Activated CD4-positive, alpha-beta T cell treated with anti-CD3 and anti-CD28 coated beads for 36 hours (primary cell): ENCODE measurements at regions of chr3 and their contacts with region 1.

Region 1: GRCh38 chr3:71226565-71227269 is 356.8 kb downstream of the FOXP1 start:
- DNase-seq: peak; percentile 95
- ATAC-seq: peak; percentile 89
- H3K4me3 Mint-ChIP-seq: peak overlapping the region; percentile 78
- H3K27ac Mint-ChIP-seq: peak overlapping the region; percentile 97
- H3K4me1 Mint-ChIP-seq: peaks cover 88% of the 10 kb centered on the region
- H3K27me3 Mint-ChIP-seq: no peaks in the 10 kb centered on the region

Region 2: DNA sequence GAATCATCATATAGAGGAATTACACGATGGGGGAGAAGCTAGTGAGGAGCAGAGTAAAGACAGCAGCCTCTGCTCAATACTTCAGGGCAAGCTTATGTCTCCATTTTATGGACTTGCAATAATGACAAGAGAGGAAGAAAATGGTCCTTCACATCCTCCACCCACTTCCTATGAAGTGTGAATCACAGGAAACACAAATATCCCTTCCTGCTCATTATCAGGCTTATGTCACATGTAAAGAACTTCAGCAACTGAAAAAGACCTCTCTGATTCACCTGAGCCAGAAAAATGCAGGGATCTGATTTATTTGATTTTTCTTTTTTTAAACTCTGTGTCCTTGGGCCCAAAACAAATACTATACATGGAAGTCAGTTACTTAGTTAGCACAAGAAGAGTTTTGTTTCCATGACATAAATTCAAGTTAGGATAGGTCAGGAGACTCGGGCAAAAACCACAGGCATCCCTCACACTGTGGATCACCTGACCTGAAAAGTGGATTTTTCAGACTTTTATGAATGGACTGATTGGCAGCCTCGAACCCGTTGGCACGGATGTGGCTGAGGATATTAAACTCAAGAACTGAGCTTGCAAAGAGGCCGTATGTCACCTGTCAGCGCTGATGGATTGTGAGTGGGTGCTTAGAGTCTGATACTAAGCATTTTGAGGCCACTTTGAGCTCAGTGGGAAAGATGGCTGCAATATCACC is 293.5 kb before region 1 on chr3:
- CTCF ChIA-PET with region 1: no interaction called
- POLR2A ChIA-PET with region 1: no interaction called
- intact Hi-C with region 1: no loop called
- DNase-seq: no peak
- ATAC-seq: no peak
- H3K4me3 Mint-ChIP-seq: no peak overlapping the region
- H3K27ac Mint-ChIP-seq: no peak overlapping the region
- H3K4me1 Mint-ChIP-seq: peaks cover 6% of the 10 kb centered on the region
- H3K27me3 Mint-ChIP-seq: no peaks in the 10 kb centered on the region

Region 3: GRCh38 chr3:71057526-71057894 is 169.2 kb before region 1 on chr3:
- CTCF ChIA-PET with region 1: no interaction called
- POLR2A ChIA-PET with region 1: no interaction called
- intact Hi-C with region 1: loop called in 1 of 2 experiments (anchors 2 kb)
- DNase-seq: peak; percentile 42
- ATAC-seq: peak; percentile 80
- H3K4me3 Mint-ChIP-seq: peak overlapping the region; percentile 66
- H3K27ac Mint-ChIP-seq: peak overlapping the region; percentile 97
- H3K4me1 Mint-ChIP-seq: peaks cover 97% of the 10 kb centered on the region
- H3K27me3 Mint-ChIP-seq: no peaks in the 10 kb centered on the region

Region 4: GRCh38 chr3:71130471-71131374 is 96.0 kb before region 1 on chr3:
- CTCF ChIA-PET with region 1: interaction called, 4 read pairs
- POLR2A ChIA-PET with region 1: no interaction called
- intact Hi-C with region 1: loop called (anchors 1 kb)
- DNase-seq: peak; percentile 82
- ATAC-seq: peak; percentile 61
- H3K4me3 Mint-ChIP-seq: peak overlapping the region; percentile 90
- H3K27ac Mint-ChIP-seq: peak overlapping the region; percentile 99
- H3K4me1 Mint-ChIP-seq: peaks cover 71% of the 10 kb centered on the region
- H3K27me3 Mint-ChIP-seq: no peaks in the 10 kb centered on the region

Region 5: DNA sequence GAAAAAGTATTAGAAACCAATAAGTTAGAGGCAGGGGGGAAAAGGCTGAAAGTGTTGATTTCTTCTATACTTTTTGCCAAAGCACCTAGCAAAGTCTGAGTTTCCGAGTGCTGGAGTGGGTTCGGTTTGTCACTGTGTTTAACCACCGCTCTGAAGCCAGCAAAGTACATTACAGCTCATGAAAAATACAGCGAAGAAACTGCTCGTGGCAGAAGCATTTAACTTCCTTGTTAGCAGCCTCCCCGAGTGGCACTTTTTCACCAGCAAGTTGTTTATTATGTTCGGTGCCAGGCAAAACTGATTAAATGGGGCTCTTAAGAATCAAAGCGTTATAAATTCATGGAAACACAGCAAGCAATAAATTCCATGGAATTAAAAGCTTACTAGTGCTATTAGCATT is 43.2 kb after region 1 on chr3:
- CTCF ChIA-PET with region 1: interaction called, 3 read pairs
- POLR2A ChIA-PET with region 1: no interaction called
- intact Hi-C with region 1: loop called in 1 of 2 experiments (anchors 5 kb)
- DNase-seq: peak; percentile 31
- ATAC-seq: no peak
- H3K4me3 Mint-ChIP-seq: peak overlapping the region; percentile 44
- H3K27ac Mint-ChIP-seq: peak overlapping the region; percentile 86
- H3K4me1 Mint-ChIP-seq: peaks cover 74% of the 10 kb centered on the region
- H3K27me3 Mint-ChIP-seq: no peaks in the 10 kb centered on the region

Region 6: DNA sequence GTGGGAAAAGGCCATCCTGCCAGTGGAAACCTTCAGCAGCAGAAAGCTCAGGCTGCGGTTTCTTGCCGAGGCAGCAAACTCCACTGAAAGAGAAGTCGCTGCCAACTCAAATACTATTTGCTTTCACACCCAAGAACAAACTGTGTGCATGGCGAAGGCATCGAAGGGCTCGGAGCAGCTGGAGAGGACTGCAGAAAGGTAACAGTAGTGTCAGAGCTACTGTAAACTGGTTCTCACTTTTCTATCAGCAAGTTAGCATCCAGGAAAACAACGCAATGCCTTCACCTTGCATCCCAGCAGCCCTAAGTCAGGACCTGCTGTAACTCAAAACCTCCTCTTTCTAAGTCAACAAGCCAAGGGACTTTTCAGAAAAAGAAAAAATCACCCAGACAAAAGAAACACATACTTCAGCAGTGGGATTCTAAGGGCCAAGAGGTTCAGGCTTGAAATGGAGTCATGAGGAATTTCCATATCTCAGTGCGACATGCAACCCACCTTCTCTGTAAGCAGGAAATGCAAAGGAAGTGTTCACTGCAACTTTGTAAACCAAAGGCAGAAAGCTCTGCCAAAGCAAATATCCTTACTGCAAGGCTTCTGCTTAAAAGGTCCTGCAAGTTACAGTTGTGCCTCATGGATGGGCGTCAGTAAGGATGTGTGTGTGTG is 163.3 kb after region 1 on chr3:
- CTCF ChIA-PET with region 1: no interaction called
- POLR2A ChIA-PET with region 1: no interaction called
- intact Hi-C with region 1: loop called in 1 of 2 experiments (anchors 2 kb)
- DNase-seq: peak; percentile 52
- ATAC-seq: peak; percentile 18
- H3K4me3 Mint-ChIP-seq: peak overlapping the region; percentile 52
- H3K27ac Mint-ChIP-seq: peak overlapping the region; percentile 69
- H3K4me1 Mint-ChIP-seq: peaks cover 78% of the 10 kb centered on the region
- H3K27me3 Mint-ChIP-seq: no peaks in the 10 kb centered on the region

Region 7: GRCh38 chr3:71512000-71512399 is 285.3 kb after region 1 on chr3:
- CTCF ChIA-PET with region 1: interaction called, 3 read pairs
- POLR2A ChIA-PET with region 1: no interaction called
- intact Hi-C with region 1: loop called in 1 of 2 experiments (anchors 2 kb)
- DNase-seq: peak; percentile 50
- ATAC-seq: peak; percentile 95
- H3K4me3 Mint-ChIP-seq: no peak overlapping the region
- H3K27ac Mint-ChIP-seq: no peak overlapping the region
- H3K4me1 Mint-ChIP-seq: peaks cover 16% of the 10 kb centered on the region
- H3K27me3 Mint-ChIP-seq: no peaks in the 10 kb centered on the region